ENCODE measurements at regions of chr2 and their contacts with region 1.

Region 1: GRCh38 chr2:240437861-240438809 is 2.7 kb downstream of the GPC1 start:
- DNase-seq: peak; percentile 73 to 77 (median 77)
- ATAC-seq: peak; percentile 65 to 74 (median 69)
- H3K4me3 ChIP-seq: no peak overlapping the region
- H3K27ac ChIP-seq: no peak overlapping the region
- H3K4me1 ChIP-seq: peaks cover 0 to 12% (median 2%) of the 10 kb centered on the region in 4 donors
- H3K27me3 ChIP-seq: no peaks in the 10 kb centered on the region
- CTCF ChIP-seq: peak; percentile 92 to 99 (median 96)
- POLR2A ChIP-seq: no peak

Region 2: DNA sequence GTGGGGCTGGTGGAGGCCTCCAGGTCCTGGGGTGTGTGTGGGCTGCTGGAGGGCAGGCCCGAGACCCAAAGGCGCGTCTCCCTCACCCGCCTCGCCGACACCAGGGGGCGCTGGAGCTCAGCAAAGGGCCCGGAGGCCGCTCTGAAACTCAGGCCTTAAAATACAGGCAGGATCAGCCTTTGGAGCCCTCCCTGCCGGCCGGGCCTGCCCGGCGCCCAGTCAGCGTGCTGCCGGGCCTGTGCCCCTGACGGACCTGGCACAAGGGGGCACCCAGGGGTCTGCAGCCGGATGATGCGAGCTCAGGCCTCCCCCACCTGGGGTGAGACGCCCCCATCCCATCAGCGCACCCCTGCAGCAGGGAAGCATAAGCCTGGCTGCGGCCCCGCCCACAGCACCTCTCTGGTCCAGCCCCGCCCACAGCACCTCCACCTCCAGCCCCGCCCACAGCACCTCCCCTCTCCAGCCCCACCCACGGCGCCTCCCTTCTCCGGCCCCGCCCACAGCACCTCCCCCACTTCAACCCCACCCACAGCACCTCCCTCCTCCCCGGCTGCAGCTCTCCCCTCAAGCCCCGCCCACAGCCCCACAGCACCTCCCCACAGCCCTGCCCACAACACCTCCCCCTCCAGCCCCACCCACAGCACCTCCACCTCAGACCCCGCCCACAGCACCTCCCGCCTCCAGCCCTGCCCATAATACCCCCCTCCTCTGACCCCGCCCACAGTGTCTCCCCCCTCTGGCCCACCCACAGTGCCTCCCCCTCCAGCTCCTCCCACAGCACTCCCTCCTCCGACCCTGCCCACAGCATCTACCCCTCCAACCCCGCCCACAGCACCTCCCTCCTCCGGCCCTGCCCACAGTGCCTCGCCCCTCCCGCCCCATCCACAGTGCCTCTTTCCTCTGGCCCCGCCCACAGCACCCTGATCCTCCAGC is 204.9 kb before region 1 on chr2:
- intact Hi-C with region 1: loop called (anchors 2 to 5 kb)
- DNase-seq: peak; percentile 97 to 98 (median 98)
- ATAC-seq: peak; percentile 77 to 88 (median 82)
- H3K4me3 ChIP-seq: peak overlapping the region; percentile 26 to 53 (median 48)
- H3K27ac ChIP-seq: peak overlapping the region in 2 of 3 donors; percentile 15 to 64
- H3K4me1 ChIP-seq: peaks cover 0 to 26% (median 6%) of the 10 kb centered on the region in 4 donors
- H3K27me3 ChIP-seq: no peaks in the 10 kb centered on the region
- CTCF ChIP-seq: peak; percentile 87 to 95 (median 92)
- POLR2A ChIP-seq: peak; percentile 13

Region 3: DNA sequence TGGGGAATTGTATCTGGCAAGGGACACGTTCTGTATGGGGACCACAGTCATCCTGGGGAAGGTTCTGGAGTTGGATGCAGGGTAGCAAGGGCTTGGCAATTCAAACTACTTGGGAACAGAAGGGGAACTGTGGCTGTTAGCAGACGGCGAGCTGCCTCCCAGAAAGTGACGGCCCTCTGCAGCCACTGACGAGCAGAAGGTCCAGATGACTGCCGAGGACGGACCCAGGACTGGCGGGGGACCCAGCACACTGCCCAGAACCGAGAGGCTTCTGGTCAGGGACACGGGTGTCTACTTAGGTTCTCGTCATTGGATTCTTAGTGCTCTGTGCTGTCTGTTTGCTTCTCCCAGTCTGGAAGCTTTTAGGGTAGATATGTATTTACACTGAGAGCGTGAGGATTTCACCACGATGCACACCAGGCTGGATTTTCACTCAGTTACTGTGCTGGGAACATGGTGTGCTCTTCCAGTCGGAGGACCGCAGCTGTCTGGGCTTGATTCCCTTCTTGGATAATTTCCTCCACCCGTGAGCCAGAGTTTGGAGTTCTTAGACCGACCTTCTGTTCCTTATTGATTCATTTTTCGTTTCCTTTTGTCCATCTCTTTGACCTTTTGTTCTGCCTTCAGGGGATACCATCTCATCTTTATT is 200.5 kb after region 1 on chr2:
- intact Hi-C with region 1: no loop called
- DNase-seq: no peak
- ATAC-seq: no peak
- H3K4me3 ChIP-seq: no peak overlapping the region
- H3K27ac ChIP-seq: no peak overlapping the region
- H3K4me1 ChIP-seq: no peaks in the 10 kb centered on the region
- H3K27me3 ChIP-seq: no peaks in the 10 kb centered on the region
- CTCF ChIP-seq: no peak
- POLR2A ChIP-seq: no peak

Measured in right lobe of liver (tissue), 6 donors.